ENCODE measurements at regions of chr14 and their contacts with region 1.

Region 1: DNA sequence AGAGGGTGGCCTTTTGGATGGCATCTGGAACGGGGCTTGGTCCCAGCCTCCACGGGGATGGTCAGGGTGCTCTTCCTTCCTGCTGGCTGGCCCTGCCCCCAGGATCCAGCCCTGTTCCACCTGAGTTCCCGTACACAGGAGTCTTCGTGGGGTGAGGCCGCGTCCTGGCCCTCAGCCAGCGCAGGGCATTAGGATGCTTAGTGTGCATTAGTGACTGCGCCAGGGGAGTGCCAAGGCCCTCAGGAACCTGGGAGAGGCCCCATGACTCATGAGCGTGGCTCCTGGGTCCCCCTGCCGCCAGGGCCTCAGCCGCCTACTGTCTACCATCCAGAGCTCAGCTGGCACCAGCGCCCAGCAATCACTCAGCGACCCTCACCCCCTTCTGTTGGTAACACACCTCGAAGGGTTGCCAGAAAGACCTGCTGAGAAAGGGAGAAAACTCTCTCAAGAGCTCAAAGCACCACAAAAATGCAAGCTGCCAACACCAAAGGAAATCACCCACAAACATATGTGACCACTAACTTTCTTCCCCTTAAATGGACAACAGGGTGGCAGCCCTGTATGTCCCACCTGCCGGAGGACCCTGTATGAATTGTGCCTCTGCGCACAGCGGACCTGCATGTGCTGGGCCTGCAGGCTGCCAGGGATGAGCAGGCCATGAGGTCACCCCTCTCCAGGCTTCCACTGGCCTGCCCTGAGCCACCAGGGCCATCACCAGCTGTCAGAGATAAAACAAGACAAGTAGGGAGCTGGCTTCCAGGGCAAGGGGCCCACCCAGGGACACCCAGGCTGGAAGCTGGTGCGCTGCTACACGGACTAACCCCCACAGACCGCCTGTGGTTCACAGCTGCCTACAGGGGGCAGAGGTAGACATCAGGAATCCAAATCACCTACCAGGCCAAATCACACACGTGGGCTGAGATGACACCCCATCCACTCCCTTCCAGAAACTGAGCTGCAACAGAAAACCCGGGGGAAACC is 28.7 kb downstream of the CCDC85C start:
- DNase-seq: peak; percentile 71
- H3K4me3 ChIP-seq: no peak overlapping the region
- H3K27ac ChIP-seq: peak overlapping the region; percentile 53 to 95
- H3K4me1 ChIP-seq: peaks cover 51 to 99% of the 10 kb centered on the region in 2 experiments
- H3K27me3 ChIP-seq: no peaks in the 10 kb centered on the region
- CTCF ChIP-seq: peak; percentile 40
- EP300 ChIP-seq: peak; percentile 42 to 59; a peak in 2 of 4 replicates
- RAD21 ChIP-seq: peak; percentile 51

Region 2: GRCh38 chr14:99518441-99519346 is 56.6 kb before region 1 on chr14:
- CTCF ChIA-PET with region 1: interaction called, 12 read pairs
- POLR2A ChIA-PET with region 1: no interaction called
- DNase-seq: peak; percentile 94
- H3K4me3 ChIP-seq: peak overlapping the region in 1 of 2 experiments; percentile 49; a peak in 1 of 4 replicates
- H3K27ac ChIP-seq: peak overlapping the region in 1 of 2 experiments; percentile 31; a peak in 1 of 4 replicates
- H3K4me1 ChIP-seq: peaks cover 11 to 27% of the 10 kb centered on the region in 2 experiments; a peak in 3 of 4 replicates
- H3K27me3 ChIP-seq: no peaks in the 10 kb centered on the region
- CTCF ChIP-seq: peak; percentile 90
- EP300 ChIP-seq: no peak
- RAD21 ChIP-seq: peak; percentile 95

Region 3: DNA sequence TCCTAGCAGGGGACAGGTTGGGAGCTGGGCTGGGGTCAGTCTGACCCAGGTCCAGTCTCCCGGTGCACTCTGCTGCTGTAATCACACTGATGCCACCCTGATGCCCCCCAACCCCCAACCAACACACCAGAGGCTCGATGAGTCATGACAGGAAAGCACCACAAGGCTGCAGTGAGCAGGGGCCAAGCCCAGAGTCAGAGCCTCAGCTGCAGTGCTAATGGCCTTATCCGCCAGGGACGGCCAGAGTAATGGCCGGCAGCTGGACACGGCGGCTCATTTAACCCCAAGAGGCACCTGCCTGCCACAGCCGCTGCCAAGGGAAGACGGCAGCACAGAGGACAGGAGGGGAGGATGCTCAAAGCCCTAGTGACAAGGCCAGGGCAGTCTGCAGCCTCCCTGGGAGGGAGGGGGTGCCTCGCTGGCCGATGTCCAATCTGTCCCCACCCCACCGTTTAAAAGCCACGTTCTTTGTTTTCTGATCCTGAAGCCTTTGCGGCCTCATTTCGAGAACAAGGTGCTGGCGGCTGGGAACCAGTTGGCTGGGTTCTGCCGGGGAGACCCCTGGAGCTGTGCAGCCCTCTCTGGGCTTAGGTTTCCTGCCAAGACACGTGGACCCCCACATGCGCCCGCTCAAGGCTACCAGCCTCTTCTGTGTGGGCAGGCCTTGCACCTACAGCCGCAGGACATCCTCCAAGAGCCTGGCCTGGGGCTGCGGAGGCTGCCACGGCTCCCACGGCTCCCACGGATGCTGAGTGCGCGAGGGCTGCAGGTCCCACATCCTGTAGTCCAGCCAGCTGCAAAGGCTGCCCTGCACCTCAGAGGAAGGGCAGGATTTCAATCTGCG is 15.6 kb after region 1 on chr14:
- CTCF ChIA-PET with region 1: interaction called, 14 read pairs
- POLR2A ChIA-PET with region 1: interaction called, 7 read pairs
- DNase-seq: peak; percentile 88
- H3K4me3 ChIP-seq: no peak overlapping the region; a peak in 2 of 4 replicates
- H3K27ac ChIP-seq: peak overlapping the region; percentile 33 to 95; a peak in 3 of 4 replicates
- H3K4me1 ChIP-seq: peaks cover 28 to 91% of the 10 kb centered on the region in 2 experiments
- H3K27me3 ChIP-seq: no peaks in the 10 kb centered on the region
- CTCF ChIP-seq: no peak
- EP300 ChIP-seq: no peak; a peak in 1 of 4 replicates
- RAD21 ChIP-seq: peak; percentile 34

Region 4: GRCh38 chr14:99604283-99604765 is 29.0 kb after region 1 on chr14:
- CTCF ChIA-PET with region 1: interaction called, 15 read pairs
- POLR2A ChIA-PET with region 1: interaction called, 19 read pairs
- DNase-seq: peak; percentile 100
- H3K4me3 ChIP-seq: peak overlapping the region; percentile 89 to 90
- H3K27ac ChIP-seq: peak overlapping the region; percentile 82 to 96
- H3K4me1 ChIP-seq: peaks cover 22 to 53% of the 10 kb centered on the region in 2 experiments
- H3K27me3 ChIP-seq: no peaks in the 10 kb centered on the region
- CTCF ChIP-seq: no peak
- EP300 ChIP-seq: no peak
- RAD21 ChIP-seq: no peak

Region 5: DNA sequence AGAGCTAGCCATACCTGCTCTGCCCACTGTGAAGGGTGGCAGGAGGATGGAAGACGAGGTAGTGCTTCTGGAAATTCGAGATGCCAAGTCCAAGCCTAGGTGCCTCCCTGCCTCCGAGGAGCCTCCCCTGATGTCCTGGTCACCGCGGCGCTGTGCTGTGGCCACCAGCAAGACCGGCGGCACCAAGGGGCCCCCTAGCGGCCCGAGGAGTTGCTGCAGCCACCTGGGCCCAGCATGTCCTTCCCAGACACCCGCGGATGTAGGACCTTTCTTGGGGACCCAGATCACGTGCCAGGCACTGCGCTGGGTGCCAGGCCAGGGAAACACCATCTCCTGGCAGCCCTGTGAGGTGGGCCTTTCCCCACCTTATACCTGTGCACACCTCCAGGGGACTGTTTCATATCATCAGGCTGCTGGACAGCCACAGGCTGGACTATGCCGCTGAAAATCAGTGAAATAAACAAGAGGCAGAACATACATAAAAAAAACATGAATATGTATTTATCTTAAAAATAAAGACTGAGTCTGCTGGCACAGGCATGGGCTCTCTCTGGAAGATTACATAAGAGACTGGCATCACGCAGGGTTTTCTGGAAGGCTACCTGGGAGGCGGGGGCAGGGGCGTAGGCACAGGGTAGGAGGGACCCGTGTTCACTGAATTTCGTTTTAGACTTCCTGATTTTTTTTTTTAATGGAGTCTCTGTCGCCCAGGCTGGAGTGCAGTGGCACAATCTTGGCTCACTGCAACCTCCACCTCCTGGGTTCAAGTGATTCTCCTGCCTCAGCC is 53.7 kb after region 1 on chr14:
- CTCF ChIA-PET with region 1: interaction called, 11 read pairs
- POLR2A ChIA-PET with region 1: interaction called, 3 read pairs
- DNase-seq: peak; percentile 93
- H3K4me3 ChIP-seq: peak overlapping the region in 1 of 2 experiments; percentile 50; a peak in 1 of 4 replicates
- H3K27ac ChIP-seq: no peak overlapping the region
- H3K4me1 ChIP-seq: peaks cover 0 to 29% of the 10 kb centered on the region in 2 experiments; a peak in 2 of 4 replicates
- H3K27me3 ChIP-seq: no peaks in the 10 kb centered on the region
- CTCF ChIP-seq: peak; percentile 96
- EP300 ChIP-seq: no peak
- RAD21 ChIP-seq: peak; percentile 97

Region 6: GRCh38 chr14:99672506-99673304 is 97.4 kb after region 1 on chr14:
- CTCF ChIA-PET with region 1: no interaction called
- POLR2A ChIA-PET with region 1: no interaction called
- DNase-seq: no peak
- H3K4me3 ChIP-seq: no peak overlapping the region
- H3K27ac ChIP-seq: no peak overlapping the region
- H3K4me1 ChIP-seq: peaks cover 3 to 7% of the 10 kb centered on the region in 2 experiments; a peak in 2 of 4 replicates
- H3K27me3 ChIP-seq: 0 out of 2 replicates have a peak, but pooled peaks cover 7% of the 10 kb centered on the region
- CTCF ChIP-seq: no peak
- EP300 ChIP-seq: no peak
- RAD21 ChIP-seq: no peak

Measured in SK-N-SH (cell line).